Psoas muscle (tissue), 8 donors: ENCODE measurements at regions of chr5 and their contacts with region 1.

Region 1: DNA sequence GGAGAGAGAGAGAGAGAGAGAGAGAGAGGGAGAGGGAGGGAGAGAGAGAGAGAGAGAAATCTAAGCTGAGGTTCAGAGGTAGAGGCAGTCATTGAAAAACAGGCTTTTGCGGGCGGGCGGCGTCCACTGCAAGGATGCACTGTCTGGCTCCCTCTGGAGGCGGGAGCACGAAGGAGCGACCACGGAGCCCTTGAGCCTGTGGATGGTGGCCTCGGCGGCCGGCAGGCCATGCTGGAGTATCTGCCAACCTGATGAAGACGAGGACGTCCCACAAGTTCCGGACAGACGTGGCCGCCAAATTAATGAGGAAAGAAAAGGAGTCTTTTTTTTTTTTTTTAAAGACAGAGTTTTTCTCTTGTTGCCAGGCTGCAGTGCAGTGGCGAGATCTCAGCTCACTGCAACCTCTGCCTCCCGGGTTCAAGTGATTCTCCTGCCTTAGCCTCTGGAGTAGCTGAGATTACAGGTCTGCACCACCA is 2.2 kb upstream of the CCDC125 start:
- DNase-seq: peak; percentile 86 to 92
- ATAC-seq: peak; percentile 84 to 89 (median 86)
- H3K4me3 ChIP-seq: no peak overlapping the region
- H3K27ac ChIP-seq: no peak overlapping the region
- H3K4me1 ChIP-seq: peaks cover 9% of the 10 kb centered on the region
- H3K27me3 ChIP-seq: no peaks in the 10 kb centered on the region
- CTCF ChIP-seq: peak; percentile 79

Region 2: DNA sequence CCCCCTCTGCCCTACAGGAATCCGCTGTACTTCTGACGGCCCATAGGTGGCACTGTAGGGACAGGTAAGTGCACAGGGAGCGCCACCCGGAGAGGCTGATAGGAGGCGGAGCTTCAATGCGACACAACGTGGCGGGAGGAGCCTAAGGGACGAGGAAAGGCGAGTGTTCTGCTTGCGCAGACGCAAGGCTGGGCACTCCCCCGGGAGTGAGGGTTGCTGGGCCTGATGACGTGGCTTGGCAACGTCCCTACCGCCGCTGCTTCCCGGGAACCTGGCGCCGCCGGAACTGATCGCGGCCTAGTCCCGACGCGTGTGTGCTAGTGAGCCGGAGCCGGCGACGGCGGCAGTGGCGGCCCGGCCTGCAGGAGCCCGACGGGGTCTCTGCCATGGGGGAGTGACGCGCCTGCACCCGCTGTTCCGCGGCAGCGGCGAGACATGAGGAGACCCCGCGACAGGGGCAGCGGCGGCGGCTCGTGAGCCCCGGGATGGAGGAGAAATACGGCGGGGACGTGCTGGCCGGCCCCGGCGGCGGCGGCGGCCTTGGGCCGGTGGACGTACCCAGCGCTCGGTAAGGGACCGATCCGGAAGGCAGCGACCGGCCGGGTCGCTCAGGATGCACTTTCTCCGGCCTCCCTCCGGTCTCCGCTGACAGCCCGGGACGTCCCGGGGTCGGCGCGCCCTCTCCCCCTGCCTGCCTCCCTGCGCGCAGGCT is 240.9 kb before region 1 on chr5 and contains the start of gene SLC30A5:
- intact Hi-C with region 1: loop called in 1 of 2 experiments (anchors 10 kb)
- DNase-seq: peak; percentile 99 to 100
- ATAC-seq: peak; percentile 99 to 100 (median 100)
- H3K4me3 ChIP-seq: peak within 1 kb of the TSS; percentile 94
- H3K27ac ChIP-seq: peak within 1 kb of the TSS; percentile 97
- H3K4me1 ChIP-seq: peaks cover 9% of the 10 kb centered on the region
- H3K27me3 ChIP-seq: no peaks in the 10 kb centered on the region
- CTCF ChIP-seq: peak; percentile 90
- total RNA-seq, gene SLC30A5: 14.2 to 21.1 (median 17.4) TPM

Region 3: DNA sequence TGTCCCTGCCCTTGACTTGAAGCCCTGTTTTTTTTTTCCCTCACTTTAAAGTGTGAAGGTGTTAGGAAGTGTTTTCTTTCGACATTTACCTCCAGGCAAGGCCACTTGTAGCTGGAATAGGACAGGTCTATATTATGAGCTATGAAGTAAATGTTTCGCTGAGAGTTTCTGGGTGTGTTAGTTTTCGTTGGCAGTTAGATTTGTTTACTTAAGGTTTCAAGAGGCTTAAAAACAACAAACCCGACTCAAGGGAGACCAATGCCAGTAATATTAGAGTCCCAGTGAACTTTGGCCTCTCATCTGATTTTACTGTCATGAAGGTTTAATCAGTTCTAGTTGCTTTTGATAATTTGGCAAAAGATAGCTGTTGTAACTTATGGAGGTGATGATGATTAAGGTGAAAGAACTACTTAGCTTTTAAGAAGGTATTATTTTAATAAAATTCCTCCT is 183.0 kb after region 1 on chr5:
- intact Hi-C with region 1: no loop called
- DNase-seq: no peak
- ATAC-seq: no peak
- H3K4me3 ChIP-seq: no peak overlapping the region
- H3K27ac ChIP-seq: no peak overlapping the region
- H3K4me1 ChIP-seq: no peaks in the 10 kb centered on the region
- H3K27me3 ChIP-seq: no peaks in the 10 kb centered on the region
- CTCF ChIP-seq: no peak